Caco-2 (cell line): ENCODE measurements at regions of chr5 and their contacts with region 1.

Region 1: GRCh38 chr5:42889311-42889933 is 77.7 kb upstream of the SELENOP start:
- DNase-seq: peak; percentile 78 to 83
- H3K4me3 ChIP-seq: no peak overlapping the region
- H3K4me3 Mint-ChIP-seq: no peak overlapping the region
- H3K27ac Mint-ChIP-seq: no peak overlapping the region
- H3K4me1 ChIP-seq: peaks cover 32% of the 10 kb centered on the region
- H3K4me1 Mint-ChIP-seq: peaks cover 8% of the 10 kb centered on the region
- H3K27me3 ChIP-seq: no peaks in the 10 kb centered on the region
- H3K27me3 Mint-ChIP-seq: no peaks in the 10 kb centered on the region
- CTCF ChIP-seq: peak; percentile 91

Region 2: GRCh38 chr5:41856644-41857491 is 1032.6 kb before region 1 on chr5:
- CTCF ChIA-PET with region 1: interaction called, 3 read pairs
- POLR2A ChIA-PET with region 1: no interaction called
- intact Hi-C with region 1: loop called (anchors 2 kb)
- DNase-seq: peak; percentile 54 to 72
- H3K4me3 ChIP-seq: no peak overlapping the region
- H3K4me3 Mint-ChIP-seq: no peak overlapping the region
- H3K27ac Mint-ChIP-seq: no peak overlapping the region
- H3K4me1 ChIP-seq: no peaks in the 10 kb centered on the region
- H3K4me1 Mint-ChIP-seq: no peaks in the 10 kb centered on the region
- H3K27me3 ChIP-seq: no peaks in the 10 kb centered on the region
- H3K27me3 Mint-ChIP-seq: no peaks in the 10 kb centered on the region
- CTCF ChIP-seq: peak; percentile 71 to 80

Region 3: GRCh38 chr5:42005561-42006153 is 883.8 kb before region 1 on chr5:
- CTCF ChIA-PET with region 1: interaction called, 3 read pairs
- POLR2A ChIA-PET with region 1: no interaction called
- intact Hi-C with region 1: loop called (anchors 10 kb)
- DNase-seq: no peak
- H3K4me3 ChIP-seq: no peak overlapping the region
- H3K4me3 Mint-ChIP-seq: no peak overlapping the region
- H3K27ac Mint-ChIP-seq: no peak overlapping the region
- H3K4me1 ChIP-seq: no peaks in the 10 kb centered on the region
- H3K4me1 Mint-ChIP-seq: no peaks in the 10 kb centered on the region
- H3K27me3 ChIP-seq: no peaks in the 10 kb centered on the region
- H3K27me3 Mint-ChIP-seq: peaks cover 2% of the 10 kb centered on the region
- CTCF ChIP-seq: peak; percentile 66 to 74

Region 4: DNA sequence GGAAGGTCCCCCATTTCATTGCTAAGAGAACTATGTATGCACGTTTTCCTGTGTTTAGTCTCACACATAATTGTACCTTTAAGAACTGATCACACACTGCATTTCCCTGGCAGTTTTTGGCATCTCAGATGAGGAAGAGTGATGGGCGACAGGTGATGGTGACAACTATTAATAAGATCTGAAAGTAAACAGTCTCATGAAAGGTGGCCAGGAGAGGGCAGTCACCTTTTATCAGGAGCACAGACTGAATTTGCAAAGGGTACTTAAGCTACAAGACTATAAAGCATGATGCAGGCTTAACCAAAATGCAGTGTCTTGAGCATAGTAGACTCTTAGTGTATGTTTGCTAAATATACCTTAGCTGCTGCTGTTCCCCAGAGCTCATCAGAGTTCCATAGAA is 374.7 kb before region 1 on chr5:
- CTCF ChIA-PET with region 1: interaction called, 9 read pairs
- POLR2A ChIA-PET with region 1: no interaction called
- intact Hi-C with region 1: loop called (anchors 1 kb)
- DNase-seq: peak in 1 of 2 experiments; percentile 19
- H3K4me3 ChIP-seq: no peak overlapping the region
- H3K4me3 Mint-ChIP-seq: no peak overlapping the region
- H3K27ac Mint-ChIP-seq: no peak overlapping the region
- H3K4me1 ChIP-seq: peaks cover 20% of the 10 kb centered on the region; the same call in 1 of the 2 replicates
- H3K4me1 Mint-ChIP-seq: peaks cover 8% of the 10 kb centered on the region
- H3K27me3 ChIP-seq: no peaks in the 10 kb centered on the region
- H3K27me3 Mint-ChIP-seq: no peaks in the 10 kb centered on the region
- CTCF ChIP-seq: peak; percentile 16 to 33

Region 5: GRCh38 chr5:42645138-42645537 is 244.3 kb before region 1 on chr5:
- CTCF ChIA-PET with region 1: no interaction called
- POLR2A ChIA-PET with region 1: no interaction called
- intact Hi-C with region 1: loop called (anchors 5 kb)
- DNase-seq: no peak
- H3K4me3 ChIP-seq: no peak overlapping the region
- H3K4me3 Mint-ChIP-seq: no peak overlapping the region
- H3K27ac Mint-ChIP-seq: no peak overlapping the region
- H3K4me1 ChIP-seq: 0 out of 2 replicates have a peak, but pooled peaks cover 4% of the 10 kb centered on the region
- H3K4me1 Mint-ChIP-seq: peaks cover 6% of the 10 kb centered on the region
- H3K27me3 ChIP-seq: no peaks in the 10 kb centered on the region
- H3K27me3 Mint-ChIP-seq: no peaks in the 10 kb centered on the region
- CTCF ChIP-seq: no peak

Region 6: DNA sequence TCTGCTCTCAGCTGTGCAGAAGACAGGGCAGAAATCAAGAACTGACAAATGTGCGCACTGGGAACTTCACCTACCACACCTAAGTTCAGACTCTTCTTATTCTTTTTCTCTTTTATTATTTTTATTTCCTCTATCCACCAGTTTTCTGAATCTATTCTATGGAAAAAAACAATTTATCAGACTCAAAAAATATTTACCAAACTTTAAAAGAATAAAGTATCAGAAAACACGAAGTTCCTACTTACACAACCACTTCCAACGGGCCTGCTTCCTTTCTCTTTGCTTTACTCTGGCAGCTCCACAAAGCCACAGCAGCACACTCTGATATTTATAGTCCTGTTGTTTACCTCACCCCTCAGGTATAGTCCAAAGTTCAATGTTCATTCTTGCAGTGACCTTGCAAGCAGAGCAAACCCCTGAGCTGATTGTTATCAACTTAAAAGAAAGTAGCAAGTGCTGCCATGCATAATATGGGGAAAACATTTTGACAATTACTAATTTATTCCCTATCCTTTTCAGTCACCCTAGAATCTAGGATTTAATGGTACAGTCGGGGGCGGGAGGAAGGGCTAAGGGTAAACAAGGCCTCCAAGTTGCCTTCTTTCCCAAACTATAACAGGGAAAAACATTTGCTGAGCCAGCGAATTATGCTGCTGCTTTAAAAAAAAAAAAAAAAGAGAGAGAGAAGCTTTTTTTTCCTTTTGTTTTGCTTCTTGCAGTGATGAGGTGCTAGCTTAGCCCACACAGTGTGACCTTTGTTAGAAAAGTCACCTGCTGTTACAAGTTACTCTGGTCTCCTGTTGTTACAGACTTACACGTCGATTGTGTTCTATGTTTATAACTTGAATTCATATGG is 77.6 kb before region 1 on chr5 and contains the start of gene SELENOP:
- CTCF ChIA-PET with region 1: interaction called, 6 read pairs
- POLR2A ChIA-PET with region 1: interaction called, 3 read pairs
- intact Hi-C with region 1: loop called (anchors 1 kb)
- DNase-seq: peak; percentile 76 to 83
- H3K4me3 ChIP-seq: peak within 1 kb of the TSS; percentile 45
- H3K4me3 Mint-ChIP-seq: peak within 1 kb of the TSS; percentile 75
- H3K27ac Mint-ChIP-seq: peak within 1 kb of the TSS; percentile 82
- H3K4me1 ChIP-seq: peaks cover 25% of the 10 kb centered on the region
- H3K4me1 Mint-ChIP-seq: peaks cover 30% of the 10 kb centered on the region
- H3K27me3 ChIP-seq: no peaks in the 10 kb centered on the region
- H3K27me3 Mint-ChIP-seq: no peaks in the 10 kb centered on the region
- CTCF ChIP-seq: no peak
- total RNA-seq, gene SELENOP: 114 and 153 TPM in 2 replicates

Region 7: DNA sequence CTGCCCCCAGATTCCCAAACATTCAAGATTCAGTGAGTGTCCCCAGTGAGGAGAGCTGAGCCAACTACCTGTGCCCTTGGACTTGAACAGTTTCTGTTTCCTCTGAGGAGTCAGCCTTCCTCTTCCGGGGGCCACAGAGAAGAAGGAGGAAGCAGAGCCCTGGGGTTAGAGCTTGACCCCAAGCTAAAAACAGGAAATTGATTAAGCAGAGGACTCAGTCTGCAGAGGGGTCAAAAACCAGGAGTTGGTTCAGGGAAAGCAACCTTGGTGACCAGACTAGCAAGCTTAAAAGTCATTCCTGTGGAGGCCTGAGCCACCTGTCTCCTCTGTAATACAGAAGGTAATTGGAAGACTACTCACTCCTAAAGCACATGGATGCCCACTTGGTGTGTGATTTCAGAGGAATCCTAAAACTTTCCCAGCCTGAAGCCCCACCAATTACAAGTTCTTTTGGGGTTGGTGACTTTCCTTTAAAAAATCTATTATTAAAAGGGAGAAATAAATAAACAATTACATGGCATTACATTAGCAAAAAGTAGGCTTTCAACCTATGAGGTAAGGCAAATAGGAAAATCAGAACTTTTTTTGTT is 13.5 kb before region 1 on chr5:
- CTCF ChIA-PET with region 1: interaction called, 5 read pairs
- POLR2A ChIA-PET with region 1: no interaction called
- intact Hi-C with region 1: loop called (anchors 1 kb)
- DNase-seq: no peak
- H3K4me3 ChIP-seq: no peak overlapping the region
- H3K4me3 Mint-ChIP-seq: no peak overlapping the region
- H3K27ac Mint-ChIP-seq: no peak overlapping the region
- H3K4me1 ChIP-seq: peaks cover 58% of the 10 kb centered on the region
- H3K4me1 Mint-ChIP-seq: peaks cover 49% of the 10 kb centered on the region
- H3K27me3 ChIP-seq: no peaks in the 10 kb centered on the region
- H3K27me3 Mint-ChIP-seq: no peaks in the 10 kb centered on the region
- CTCF ChIP-seq: no peak

Region 8: DNA sequence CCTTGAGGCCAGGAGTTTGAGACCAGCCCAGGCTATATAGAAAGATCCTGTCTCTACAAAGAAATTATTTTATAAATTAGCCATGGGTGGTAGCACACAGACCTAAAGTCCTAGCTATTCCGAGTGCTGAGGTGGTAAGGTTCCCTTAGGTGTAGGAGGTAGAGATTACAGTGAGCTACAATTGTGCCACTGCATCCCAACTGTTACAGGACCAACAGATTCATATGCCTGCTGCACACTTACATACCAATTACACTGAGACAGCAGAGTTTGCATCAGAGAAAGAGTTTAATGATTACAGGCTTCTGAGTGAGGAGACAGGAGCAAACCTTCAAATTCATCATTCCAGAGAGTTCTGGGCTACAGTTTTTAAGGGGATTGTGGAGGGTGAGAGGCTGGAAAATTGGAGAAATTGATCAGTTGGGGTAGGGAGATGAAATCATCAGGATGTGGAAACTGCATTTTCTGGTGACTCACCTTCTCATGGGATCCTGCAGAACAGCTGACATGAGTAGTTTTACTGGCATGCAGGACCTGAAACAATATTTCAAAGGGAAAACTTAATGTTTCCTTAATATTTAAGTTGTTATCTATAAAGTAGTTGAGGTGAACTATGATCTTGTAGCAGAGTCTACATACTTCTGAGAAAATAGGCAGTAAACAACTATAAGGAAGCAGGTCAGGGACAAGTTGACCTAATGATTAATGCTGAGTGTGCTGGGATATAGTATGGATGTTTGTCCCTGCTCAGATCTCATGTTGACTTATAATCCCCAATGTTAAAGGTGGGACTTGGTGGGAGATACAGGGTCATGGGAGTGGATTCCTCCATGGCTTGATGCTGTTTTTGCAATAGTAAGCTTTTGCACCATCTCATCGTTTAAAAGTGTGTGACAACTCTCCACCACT is 96.0 kb after region 1 on chr5:
- CTCF ChIA-PET with region 1: no interaction called
- POLR2A ChIA-PET with region 1: no interaction called
- intact Hi-C with region 1: no loop called
- DNase-seq: no peak
- H3K4me3 ChIP-seq: no peak overlapping the region
- H3K4me3 Mint-ChIP-seq: peak overlapping the region; percentile 17
- H3K27ac Mint-ChIP-seq: peak overlapping the region; percentile 79
- H3K4me1 ChIP-seq: peaks cover 27% of the 10 kb centered on the region
- H3K4me1 Mint-ChIP-seq: peaks cover 30% of the 10 kb centered on the region
- H3K27me3 ChIP-seq: no peaks in the 10 kb centered on the region
- H3K27me3 Mint-ChIP-seq: no peaks in the 10 kb centered on the region
- CTCF ChIP-seq: no peak